CD14-positive monocyte (primary cell): ENCODE measurements at regions of chr15 and their contacts with region 1.

Region 1: GRCh38 chr15:63093486-63094205 is 28.0 kb upstream of the LACTB start:
- DNase-seq: peak; percentile 57 to 75 (median 71)
- H3K4me3 ChIP-seq: no peak overlapping the region
- H3K4me3 Mint-ChIP-seq: no peak overlapping the region
- H3K27ac ChIP-seq: no peak overlapping the region
- H3K27ac Mint-ChIP-seq: no peak overlapping the region
- H3K4me1 ChIP-seq: peaks cover 10 to 15% of the 10 kb centered on the region in 2 donors
- H3K4me1 Mint-ChIP-seq: peaks cover 19% of the 10 kb centered on the region
- H3K27me3 ChIP-seq: no peaks in the 10 kb centered on the region
- H3K27me3 Mint-ChIP-seq: peaks cover 1 to 5% (median 1%) of the 10 kb centered on the region in 3 donors
- CTCF ChIP-seq: peak; percentile 84

Region 2: DNA sequence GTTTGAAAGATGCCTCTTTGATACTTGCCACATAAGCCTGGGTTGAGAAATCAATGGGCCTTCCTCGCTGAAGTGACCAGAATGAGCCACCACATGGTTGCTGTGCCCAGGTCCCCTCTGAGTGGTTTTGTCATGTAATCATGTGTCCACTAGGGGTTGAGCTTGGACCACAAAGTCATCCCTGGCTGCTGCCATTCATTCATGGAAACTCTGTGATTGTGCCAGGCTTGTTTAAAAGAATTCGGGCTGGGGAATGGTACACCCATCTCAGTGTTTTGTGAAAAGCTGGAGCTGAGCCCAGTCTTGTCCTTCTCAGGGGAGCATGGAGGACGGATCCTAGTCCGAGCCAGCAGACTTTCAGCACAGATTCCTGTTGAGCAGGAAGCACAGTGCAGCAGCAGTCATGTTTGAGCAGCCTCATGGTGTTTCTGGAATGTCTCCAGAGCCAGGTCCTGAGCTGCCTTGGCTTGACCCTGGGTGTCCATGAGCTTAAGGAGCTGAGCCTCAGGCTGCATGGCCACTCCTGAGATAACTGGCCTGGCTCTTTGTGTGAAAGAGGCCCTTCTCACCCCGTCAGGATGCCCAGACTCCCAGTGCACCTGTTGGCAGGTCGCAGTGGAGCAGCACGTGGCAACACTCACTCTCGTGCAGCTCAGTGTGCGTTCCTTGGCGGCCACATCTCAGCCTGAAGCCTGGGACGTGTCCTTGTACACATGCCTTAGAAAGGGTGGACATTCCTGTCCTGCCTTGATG is 311.4 kb before region 1 on chr15:
- intact Hi-C with region 1: loop called in 1 of 2 experiments (anchors 10 kb)
- DNase-seq: peak; percentile 14 to 49 (median 29)
- H3K4me3 ChIP-seq: no peak overlapping the region
- H3K4me3 Mint-ChIP-seq: no peak overlapping the region
- H3K27ac ChIP-seq: no peak overlapping the region
- H3K27ac Mint-ChIP-seq: peak overlapping the region in 1 of 7 donors; percentile 4
- H3K4me1 ChIP-seq: peaks cover 14 to 23% of the 10 kb centered on the region in 2 donors
- H3K4me1 Mint-ChIP-seq: peaks cover 32% of the 10 kb centered on the region
- H3K27me3 ChIP-seq: no peaks in the 10 kb centered on the region
- H3K27me3 Mint-ChIP-seq: peaks cover 1 to 4% (median 2%) of the 10 kb centered on the region in 3 donors
- CTCF ChIP-seq: peak; percentile 49

Region 3: DNA sequence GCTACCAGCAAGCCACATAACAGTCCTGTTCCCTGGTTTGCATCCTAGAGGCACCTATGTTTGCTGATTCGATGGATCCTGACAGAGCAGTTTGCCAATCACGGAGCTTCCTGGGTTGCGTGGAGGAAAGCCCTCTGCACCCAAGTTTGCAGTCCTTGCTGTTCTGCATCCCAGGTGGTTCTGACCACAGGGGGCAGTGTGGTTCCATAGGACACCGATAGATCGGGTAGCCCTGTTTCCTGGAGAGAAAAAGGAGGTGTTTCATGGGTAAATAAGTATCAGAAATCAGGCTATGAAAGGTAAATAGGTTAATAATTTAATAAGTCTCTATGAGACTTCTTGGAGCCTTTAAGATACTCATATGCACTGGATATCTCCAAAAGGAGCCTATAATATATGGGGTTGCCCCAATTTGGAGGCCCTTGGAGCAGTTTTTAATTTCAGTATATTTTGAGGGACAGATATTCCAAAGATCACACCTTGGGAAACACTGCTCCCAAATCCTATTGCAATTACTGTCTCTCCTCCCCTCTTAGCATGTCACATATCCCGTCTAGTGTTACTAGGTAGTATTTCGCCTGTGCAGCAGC is 245.7 kb before region 1 on chr15:
- intact Hi-C with region 1: loop called (anchors 5 kb)
- DNase-seq: peak; percentile 28 to 51 (median 40)
- H3K4me3 ChIP-seq: no peak overlapping the region
- H3K4me3 Mint-ChIP-seq: no peak overlapping the region
- H3K27ac ChIP-seq: no peak overlapping the region
- H3K27ac Mint-ChIP-seq: no peak overlapping the region
- H3K4me1 ChIP-seq: no peaks in the 10 kb centered on the region
- H3K4me1 Mint-ChIP-seq: peaks cover 7% of the 10 kb centered on the region
- H3K27me3 ChIP-seq: no peaks in the 10 kb centered on the region
- H3K27me3 Mint-ChIP-seq: peaks cover 0 to 10% (median 5%) of the 10 kb centered on the region in 3 donors
- CTCF ChIP-seq: peak; percentile 80

Region 4: DNA sequence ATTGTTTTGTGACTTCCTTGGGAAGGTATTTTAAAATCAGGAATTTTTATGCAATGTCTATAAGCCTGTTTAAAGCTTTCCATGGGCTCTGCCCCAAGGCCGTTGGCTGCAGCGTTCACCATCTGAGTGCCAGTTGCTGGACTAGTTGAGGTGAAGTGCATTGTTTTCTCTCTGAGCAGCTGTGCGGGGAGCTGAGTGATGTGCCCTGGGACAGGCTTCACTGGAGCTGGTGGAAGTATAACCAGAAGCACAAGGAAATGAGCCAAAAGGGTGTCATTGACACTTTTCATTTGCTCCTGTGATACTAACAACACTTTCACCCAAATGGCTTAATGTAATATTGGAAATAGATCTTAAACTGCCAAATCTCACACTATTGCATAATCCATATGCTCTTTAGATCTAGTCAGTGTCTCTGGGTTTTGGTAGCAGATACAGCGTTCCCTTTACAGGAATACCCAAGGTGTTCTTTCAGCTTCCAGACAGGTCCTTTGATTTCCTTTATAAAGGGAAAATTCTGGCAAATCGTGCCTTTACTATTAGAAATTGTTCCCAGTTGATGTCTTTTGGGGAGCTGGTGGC is 212.9 kb after region 1 on chr15:
- intact Hi-C with region 1: no loop called
- DNase-seq: no peak
- H3K4me3 ChIP-seq: no peak overlapping the region
- H3K4me3 Mint-ChIP-seq: no peak overlapping the region
- H3K27ac ChIP-seq: no peak overlapping the region
- H3K27ac Mint-ChIP-seq: no peak overlapping the region
- H3K4me1 ChIP-seq: no peaks in the 10 kb centered on the region
- H3K4me1 Mint-ChIP-seq: no peaks in the 10 kb centered on the region
- H3K27me3 ChIP-seq: no peaks in the 10 kb centered on the region
- H3K27me3 Mint-ChIP-seq: peaks cover 0 to 2% (median 0%) of the 10 kb centered on the region in 3 donors
- CTCF ChIP-seq: no peak